ENCODE measurements at regions of chr3 and their contacts with region 1.

Region 1: GRCh38 chr3:192745130-192745529 is 17.8 kb upstream of the FGF12 start:
- DNase-seq: no peak
- H3K4me3 ChIP-seq: no peak overlapping the region
- H3K4me3 Mint-ChIP-seq: peak overlapping the region; percentile 16
- H3K27ac Mint-ChIP-seq: no peak overlapping the region
- H3K4me1 ChIP-seq: no peaks in the 10 kb centered on the region
- H3K4me1 Mint-ChIP-seq: no peaks in the 10 kb centered on the region
- H3K27me3 ChIP-seq: no peaks in the 10 kb centered on the region
- H3K27me3 Mint-ChIP-seq: peaks cover 3% of the 10 kb centered on the region
- CTCF ChIP-seq: no peak

Region 2: DNA sequence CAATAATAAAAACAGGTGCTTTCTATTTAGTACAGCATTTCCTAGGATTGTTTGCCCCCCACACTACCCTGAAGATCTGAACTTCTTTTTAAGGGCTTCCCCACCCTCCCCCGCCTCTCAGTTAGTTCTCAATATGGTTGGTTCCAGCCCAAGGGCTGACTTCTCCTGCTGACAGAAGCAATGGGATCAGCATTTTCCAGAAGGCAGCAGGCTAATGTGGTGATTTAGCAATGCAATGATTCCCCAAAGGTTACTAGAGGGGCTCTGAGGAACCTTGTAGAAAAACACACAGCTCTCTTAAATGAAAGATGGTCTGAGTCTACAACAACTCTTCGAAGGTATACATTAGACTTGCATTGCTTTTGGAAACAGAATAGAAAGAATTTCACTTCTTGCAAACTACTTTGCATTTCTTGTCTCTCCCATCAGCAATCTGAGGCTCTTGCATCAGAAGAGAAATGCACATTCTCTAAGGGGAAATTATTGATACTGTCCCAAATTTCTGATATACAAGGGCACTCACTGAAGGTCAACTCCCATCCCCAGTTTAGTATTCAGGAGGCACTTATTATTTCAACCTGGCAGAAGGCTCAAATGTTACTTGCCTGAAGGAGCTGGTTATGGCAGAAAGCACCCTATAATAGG is 48.1 kb before region 1 on chr3:
- CTCF ChIA-PET with region 1: no interaction called
- POLR2A ChIA-PET with region 1: no interaction called
- intact Hi-C with region 1: no loop called
- DNase-seq: no peak
- H3K4me3 ChIP-seq: no peak overlapping the region
- H3K4me3 Mint-ChIP-seq: no peak overlapping the region
- H3K27ac Mint-ChIP-seq: no peak overlapping the region
- H3K4me1 ChIP-seq: no peaks in the 10 kb centered on the region
- H3K4me1 Mint-ChIP-seq: no peaks in the 10 kb centered on the region
- H3K27me3 ChIP-seq: no peaks in the 10 kb centered on the region
- H3K27me3 Mint-ChIP-seq: peaks cover 12% of the 10 kb centered on the region
- CTCF ChIP-seq: no peak

Region 3: DNA sequence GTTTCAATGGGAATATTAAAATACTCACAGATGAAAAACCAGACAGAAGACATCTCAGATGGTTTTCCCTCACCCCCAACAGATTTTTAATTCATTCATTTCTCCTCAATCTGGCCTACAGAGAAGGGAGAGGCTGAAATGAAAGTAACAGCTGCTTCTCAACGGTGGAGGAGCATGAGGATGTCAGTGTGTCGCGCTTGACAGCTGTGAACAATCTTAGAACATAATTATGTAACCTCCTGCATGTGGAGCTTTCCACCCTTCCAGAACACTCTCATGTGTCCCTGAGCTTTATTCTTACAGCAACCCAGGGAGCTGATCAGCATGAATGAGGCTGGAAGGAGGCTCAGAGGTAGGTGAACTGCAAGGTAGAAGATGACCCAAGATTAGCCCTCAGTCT is 119.8 kb after region 1 on chr3:
- CTCF ChIA-PET with region 1: no interaction called
- POLR2A ChIA-PET with region 1: no interaction called
- intact Hi-C with region 1: no loop called
- DNase-seq: no peak
- H3K4me3 ChIP-seq: no peak overlapping the region
- H3K4me3 Mint-ChIP-seq: no peak overlapping the region
- H3K27ac Mint-ChIP-seq: no peak overlapping the region
- H3K4me1 ChIP-seq: no peaks in the 10 kb centered on the region
- H3K4me1 Mint-ChIP-seq: peaks cover 11% of the 10 kb centered on the region
- H3K27me3 ChIP-seq: no peaks in the 10 kb centered on the region
- H3K27me3 Mint-ChIP-seq: no peaks in the 10 kb centered on the region
- CTCF ChIP-seq: no peak

Region 4: GRCh38 chr3:193614430-193614829 is 869.3 kb after region 1 on chr3:
- CTCF ChIA-PET with region 1: interaction called, 11 read pairs
- POLR2A ChIA-PET with region 1: no interaction called
- intact Hi-C with region 1: no loop called
- DNase-seq: no peak
- H3K4me3 ChIP-seq: no peak overlapping the region
- H3K4me3 Mint-ChIP-seq: no peak overlapping the region
- H3K27ac Mint-ChIP-seq: no peak overlapping the region
- H3K4me1 ChIP-seq: no peaks in the 10 kb centered on the region
- H3K4me1 Mint-ChIP-seq: no peaks in the 10 kb centered on the region
- H3K27me3 ChIP-seq: no peaks in the 10 kb centered on the region
- H3K27me3 Mint-ChIP-seq: no peaks in the 10 kb centered on the region
- CTCF ChIP-seq: no peak